Mammary epithelial cell (primary cell): ENCODE measurements at regions of chr1 and their contacts with region 1.

Region 1: DNA sequence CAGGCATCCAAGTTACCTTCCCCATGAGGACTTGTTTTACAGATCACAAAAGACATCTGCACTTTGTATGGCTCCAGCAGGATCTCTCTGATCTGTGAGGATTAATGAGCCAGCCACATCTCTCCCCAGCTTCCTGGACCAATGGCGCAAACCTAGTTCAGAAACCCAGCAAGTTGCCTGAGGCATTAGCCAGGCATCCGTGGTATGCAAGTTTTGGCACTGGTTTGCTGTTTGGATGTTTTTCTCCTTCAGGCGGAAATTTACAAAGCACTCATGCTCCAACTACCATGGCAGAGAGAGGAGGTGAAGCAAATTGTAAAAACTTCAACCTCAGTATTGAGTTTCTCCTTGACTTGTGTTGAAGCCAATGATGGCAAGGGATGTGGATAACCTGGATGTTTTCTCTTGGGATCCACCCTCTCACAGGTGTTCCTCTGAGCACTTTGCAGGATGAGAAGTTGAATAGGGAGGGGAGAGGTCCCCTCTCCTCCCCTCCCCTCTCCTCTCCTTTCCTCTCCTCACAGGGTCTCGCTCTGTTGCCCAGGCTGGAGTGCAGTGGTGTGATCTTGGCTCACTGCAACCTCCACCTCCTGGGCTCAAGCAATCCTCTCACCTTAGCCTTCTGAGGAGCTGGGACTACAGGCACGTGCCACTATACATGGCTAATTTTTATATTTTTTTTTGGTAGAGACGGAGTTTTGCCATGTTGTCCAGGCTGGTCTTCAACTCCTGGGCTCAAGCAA is 25.6 kb upstream of the ENO1 start:
- DNase-seq: peak; percentile 93
- H3K4me3 ChIP-seq: no peak overlapping the region
- H3K27ac ChIP-seq: peak overlapping the region; percentile 52
- H3K4me1 ChIP-seq: peaks cover 45% of the 10 kb centered on the region
- H3K27me3 ChIP-seq: no peaks in the 10 kb centered on the region
- CTCF ChIP-seq: no peak

Region 2: DNA sequence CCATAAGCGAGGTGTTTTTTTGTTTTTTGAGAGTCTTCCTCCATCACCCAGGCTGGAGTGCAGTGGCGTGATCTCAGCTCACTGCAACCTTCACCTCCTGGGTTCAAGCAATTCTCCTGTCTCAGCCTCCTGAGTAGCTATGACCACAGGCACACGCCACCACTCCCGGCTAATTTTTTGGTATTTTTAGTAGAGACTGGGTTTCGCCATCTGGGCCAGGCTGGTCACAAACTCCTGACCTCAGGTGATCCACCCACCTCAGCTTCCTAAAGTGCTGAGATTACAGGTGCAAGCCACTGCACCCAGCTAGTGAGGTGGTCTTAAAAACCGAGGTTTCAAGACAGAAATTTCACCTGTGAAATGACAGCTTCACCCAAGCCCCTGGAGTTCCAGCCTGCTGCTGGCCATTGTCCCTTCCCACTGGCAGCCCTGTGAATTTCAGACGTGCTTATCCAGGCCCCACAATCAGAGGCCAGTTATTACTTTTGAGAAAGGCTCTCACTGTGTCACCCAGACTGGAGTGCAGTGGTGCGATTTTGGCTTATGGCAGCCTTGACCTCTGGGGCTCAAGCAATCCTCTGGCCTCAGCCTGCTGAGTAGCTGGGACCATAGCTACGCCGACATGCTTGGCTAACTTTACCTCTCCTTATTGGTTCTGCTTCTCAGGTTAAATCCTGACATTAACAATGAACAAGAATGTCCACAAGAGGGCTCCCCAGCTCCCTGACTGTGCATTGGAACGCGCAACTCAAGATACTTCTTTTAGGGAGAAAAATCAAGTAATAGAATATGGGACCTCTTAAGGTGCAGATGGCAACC is 45.0 kb before region 1 on chr1:
- CTCF ChIA-PET with region 1: no interaction called
- dilution Hi-C with region 1: loop called (anchors 5 kb)
- in situ Hi-C with region 1: no loop called
- intact Hi-C with region 1: no loop called
- DNase-seq: no peak
- H3K4me3 ChIP-seq: no peak overlapping the region
- H3K27ac ChIP-seq: no peak overlapping the region
- H3K4me1 ChIP-seq: peaks cover 21% of the 10 kb centered on the region
- H3K27me3 ChIP-seq: no peaks in the 10 kb centered on the region
- CTCF ChIP-seq: peak; percentile 64 to 65

Region 3: GRCh38 chr1:8878448-8879347 is 25.4 kb before region 1 on chr1 and contains the start of gene ENO1:
- CTCF ChIA-PET with region 1: no interaction called
- dilution Hi-C with region 1: no loop called
- in situ Hi-C with region 1: no loop called
- intact Hi-C with region 1: loop called (anchors 1 kb)
- DNase-seq: peak; percentile 97
- H3K4me3 ChIP-seq: peak within 1 kb of the TSS; percentile 55 to 71 (median 66)
- H3K27ac ChIP-seq: peak within 1 kb of the TSS; percentile 93
- H3K4me1 ChIP-seq: peaks cover 38% of the 10 kb centered on the region
- H3K27me3 ChIP-seq: no peaks in the 10 kb centered on the region
- CTCF ChIP-seq: no peak
- total RNA-seq, gene ENO1: 1,459 to 2,190 TPM

Region 4: DNA sequence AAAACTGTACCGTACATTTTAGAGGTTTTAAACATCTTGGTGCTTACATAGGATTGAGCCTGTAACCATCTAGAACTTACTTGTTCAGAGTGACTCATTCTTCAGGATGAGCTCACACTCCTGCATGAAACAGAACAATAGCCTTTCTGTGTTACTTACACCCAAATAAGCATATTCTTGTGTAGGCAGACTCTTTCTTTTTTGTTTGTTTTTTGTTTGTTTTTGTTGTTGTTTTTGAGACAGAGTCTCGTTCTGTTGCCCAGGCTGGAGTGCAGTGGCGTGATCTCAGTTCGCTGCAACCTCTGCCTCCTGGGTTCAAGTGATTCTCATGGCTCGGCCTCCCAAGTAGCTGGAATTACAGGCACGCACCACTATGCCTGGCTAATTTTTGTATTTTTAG is 37.8 kb after region 1 on chr1:
- CTCF ChIA-PET with region 1: no interaction called
- dilution Hi-C with region 1: loop called (anchors 5 kb)
- in situ Hi-C with region 1: no loop called
- intact Hi-C with region 1: no loop called
- DNase-seq: peak; percentile 83
- H3K4me3 ChIP-seq: no peak overlapping the region
- H3K27ac ChIP-seq: peak overlapping the region; percentile 37
- H3K4me1 ChIP-seq: peaks cover 12% of the 10 kb centered on the region
- H3K27me3 ChIP-seq: no peaks in the 10 kb centered on the region
- CTCF ChIP-seq: no peak

Region 5: GRCh38 chr1:9196129-9197040 is 292.3 kb after region 1 on chr1:
- CTCF ChIA-PET with region 1: no interaction called
- dilution Hi-C with region 1: no loop called
- in situ Hi-C with region 1: loop called in 1 of 2 experiments (anchors 25 kb)
- intact Hi-C with region 1: no loop called
- DNase-seq: peak; percentile 66
- H3K4me3 ChIP-seq: no peak overlapping the region
- H3K27ac ChIP-seq: no peak overlapping the region
- H3K4me1 ChIP-seq: peaks cover 35% of the 10 kb centered on the region
- H3K27me3 ChIP-seq: no peaks in the 10 kb centered on the region
- CTCF ChIP-seq: peak; percentile 67 to 74